ENCODE measurements at regions of chr4 and their contacts with region 1.

Region 1: GRCh38 chr4:82739316-82740179 is 59.0 kb downstream of the SCD5 start:
- DNase-seq: peak; percentile 82
- ATAC-seq: peak; percentile 100
- H3K4me3 Mint-ChIP-seq: no peak overlapping the region
- H3K27ac Mint-ChIP-seq: no peak overlapping the region
- H3K4me1 Mint-ChIP-seq: no peaks in the 10 kb centered on the region
- H3K27me3 Mint-ChIP-seq: peaks cover 3% of the 10 kb centered on the region

Region 2: DNA sequence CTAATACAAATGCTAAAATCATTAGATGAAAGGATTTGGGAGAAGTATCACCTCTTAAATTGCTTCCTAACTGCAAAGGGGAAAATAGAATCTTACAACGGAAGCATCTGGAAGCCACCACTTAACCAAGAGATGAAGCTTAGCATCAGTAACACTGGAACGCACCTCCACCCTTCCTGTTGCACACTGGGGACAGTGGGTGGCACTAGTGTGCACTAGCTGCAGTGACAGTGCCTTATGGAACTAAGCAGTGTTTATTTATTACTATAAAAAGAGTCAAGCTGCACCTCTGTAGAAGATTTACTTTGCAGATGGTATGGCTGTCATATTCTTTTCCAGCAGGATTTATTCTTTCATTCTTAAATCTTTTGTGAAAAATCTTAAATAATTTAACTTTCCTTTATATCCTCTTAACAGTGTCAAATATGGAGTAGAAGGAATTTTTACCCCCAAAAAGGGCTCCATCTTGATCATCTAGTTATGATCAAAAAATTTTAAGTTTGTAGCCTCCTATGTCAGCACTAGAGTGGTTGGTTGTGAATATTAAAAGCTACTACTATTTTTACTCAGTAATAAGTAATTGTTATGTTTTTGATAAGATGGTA is 17.6 kb before region 1 on chr4:
- CTCF ChIA-PET with region 1: interaction called, 61 read pairs
- POLR2A ChIA-PET with region 1: no interaction called
- DNase-seq: peak; percentile 51
- ATAC-seq: peak; percentile 79
- H3K4me3 Mint-ChIP-seq: no peak overlapping the region
- H3K27ac Mint-ChIP-seq: no peak overlapping the region
- H3K4me1 Mint-ChIP-seq: no peaks in the 10 kb centered on the region
- H3K27me3 Mint-ChIP-seq: peaks cover 2% of the 10 kb centered on the region

Measured in activated CD8-positive, alpha-beta T cell treated with anti-CD3 and anti-CD28 coated beads, Interleukin-2, amount 10 ng/mL, durations not matched to agents 7 days and 5 days (primary cell).